Sigmoid colon (tissue), 7 donors: ENCODE measurements at regions of chr1 and their contacts with region 1.

Region 1: GRCh38 chr1:37561133-37562132 is 4.7 kb downstream of the DNALI1 start:
- DNase-seq: no peak
- H3K4me3 ChIP-seq: no peak overlapping the region
- H3K27ac ChIP-seq: no peak overlapping the region
- H3K4me1 ChIP-seq: peaks cover 0 to 13% (median 10%) of the 10 kb centered on the region in 4 donors
- H3K27me3 ChIP-seq: no peaks in the 10 kb centered on the region
- CTCF ChIP-seq: peak; percentile 29 to 68 (median 50)
- EP300 ChIP-seq: no peak
- POLR2A ChIP-seq: no peak

Region 2: GRCh38 chr1:37394574-37395464 is 166.6 kb before region 1 on chr1:
- intact Hi-C with region 1: no loop called
- DNase-seq: no peak
- H3K4me3 ChIP-seq: no peak overlapping the region
- H3K27ac ChIP-seq: no peak overlapping the region
- H3K4me1 ChIP-seq: no peaks in the 10 kb centered on the region
- H3K27me3 ChIP-seq: peaks cover 7 to 68% (median 32%) of the 10 kb centered on the region in 3 donors
- CTCF ChIP-seq: no peak
- EP300 ChIP-seq: no peak
- POLR2A ChIP-seq: no peak

Region 3: DNA sequence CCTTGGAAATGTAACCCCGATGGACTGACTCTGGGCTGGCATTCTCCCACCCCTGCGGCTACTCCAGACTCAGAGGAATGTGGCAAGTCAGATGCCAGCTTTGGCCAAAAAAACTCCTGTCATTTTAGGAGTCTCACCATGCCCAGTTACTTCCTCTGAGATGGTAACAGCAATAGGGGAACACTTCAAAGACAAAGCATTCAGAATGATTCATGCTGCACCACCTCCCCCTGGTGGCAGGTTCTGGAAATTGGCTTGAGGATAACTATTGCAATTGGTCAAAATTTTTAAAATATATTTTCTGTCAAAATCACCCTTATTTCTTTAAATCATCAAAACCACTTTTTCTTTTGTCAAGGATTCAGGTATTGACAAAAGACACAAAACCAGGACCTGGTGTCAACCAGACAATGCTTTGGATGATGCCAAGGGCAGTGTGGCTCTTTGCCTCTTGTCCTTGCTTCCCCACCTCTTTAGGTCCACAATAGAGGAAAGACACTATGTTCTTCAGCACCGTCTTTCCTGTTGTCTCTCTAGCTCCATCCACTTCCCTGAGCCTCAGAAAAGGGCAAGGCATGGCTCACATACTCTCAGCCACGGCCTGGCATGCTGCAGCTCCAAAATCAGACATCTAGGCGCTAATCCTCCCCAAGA is 121.0 kb after region 1 on chr1:
- intact Hi-C with region 1: loop called (anchors 5 kb)
- DNase-seq: peak; percentile 81
- H3K4me3 ChIP-seq: no peak overlapping the region
- H3K27ac ChIP-seq: no peak overlapping the region
- H3K4me1 ChIP-seq: peaks cover 0 to 8% (median 1%) of the 10 kb centered on the region in 4 donors
- H3K27me3 ChIP-seq: no peaks in the 10 kb centered on the region
- CTCF ChIP-seq: peak; percentile 56 to 82 (median 80)
- EP300 ChIP-seq: no peak
- POLR2A ChIP-seq: no peak

Region 4: GRCh38 chr1:37741130-37741529 is 179.7 kb after region 1 on chr1:
- intact Hi-C with region 1: no loop called
- DNase-seq: no peak
- H3K4me3 ChIP-seq: no peak overlapping the region
- H3K27ac ChIP-seq: no peak overlapping the region
- H3K4me1 ChIP-seq: no peaks in the 10 kb centered on the region
- H3K27me3 ChIP-seq: peaks cover 0 to 14% (median 4%) of the 10 kb centered on the region in 3 donors
- CTCF ChIP-seq: no peak
- EP300 ChIP-seq: no peak
- POLR2A ChIP-seq: no peak

Region 5: DNA sequence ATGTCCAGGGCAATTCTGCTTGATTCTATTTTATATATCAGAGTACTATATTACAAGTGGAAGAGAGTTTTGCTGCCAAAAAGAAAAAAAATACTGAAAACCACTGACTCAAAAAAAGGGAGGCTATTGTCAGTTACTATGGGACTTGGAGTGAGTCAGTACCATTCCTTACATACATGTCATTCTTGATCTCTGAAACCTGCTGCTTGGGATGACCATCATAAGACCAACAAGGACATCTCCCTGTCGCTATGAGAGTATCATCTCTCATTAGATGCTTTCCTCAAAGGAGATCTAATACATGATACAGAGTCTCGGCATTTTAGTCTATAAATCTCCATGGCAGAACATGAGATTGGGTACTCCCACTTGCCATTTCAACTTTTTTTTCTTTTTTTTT is 397.3 kb after region 1 on chr1:
- intact Hi-C with region 1: no loop called
- DNase-seq: no peak
- H3K4me3 ChIP-seq: no peak overlapping the region
- H3K27ac ChIP-seq: no peak overlapping the region
- H3K4me1 ChIP-seq: peaks cover 0 to 6% (median 0%) of the 10 kb centered on the region in 4 donors
- H3K27me3 ChIP-seq: no peaks in the 10 kb centered on the region
- CTCF ChIP-seq: no peak
- EP300 ChIP-seq: no peak
- POLR2A ChIP-seq: no peak